AG04450 (cell line): ENCODE measurements at regions of chr17 and their contacts with region 1.

Region 1: DNA sequence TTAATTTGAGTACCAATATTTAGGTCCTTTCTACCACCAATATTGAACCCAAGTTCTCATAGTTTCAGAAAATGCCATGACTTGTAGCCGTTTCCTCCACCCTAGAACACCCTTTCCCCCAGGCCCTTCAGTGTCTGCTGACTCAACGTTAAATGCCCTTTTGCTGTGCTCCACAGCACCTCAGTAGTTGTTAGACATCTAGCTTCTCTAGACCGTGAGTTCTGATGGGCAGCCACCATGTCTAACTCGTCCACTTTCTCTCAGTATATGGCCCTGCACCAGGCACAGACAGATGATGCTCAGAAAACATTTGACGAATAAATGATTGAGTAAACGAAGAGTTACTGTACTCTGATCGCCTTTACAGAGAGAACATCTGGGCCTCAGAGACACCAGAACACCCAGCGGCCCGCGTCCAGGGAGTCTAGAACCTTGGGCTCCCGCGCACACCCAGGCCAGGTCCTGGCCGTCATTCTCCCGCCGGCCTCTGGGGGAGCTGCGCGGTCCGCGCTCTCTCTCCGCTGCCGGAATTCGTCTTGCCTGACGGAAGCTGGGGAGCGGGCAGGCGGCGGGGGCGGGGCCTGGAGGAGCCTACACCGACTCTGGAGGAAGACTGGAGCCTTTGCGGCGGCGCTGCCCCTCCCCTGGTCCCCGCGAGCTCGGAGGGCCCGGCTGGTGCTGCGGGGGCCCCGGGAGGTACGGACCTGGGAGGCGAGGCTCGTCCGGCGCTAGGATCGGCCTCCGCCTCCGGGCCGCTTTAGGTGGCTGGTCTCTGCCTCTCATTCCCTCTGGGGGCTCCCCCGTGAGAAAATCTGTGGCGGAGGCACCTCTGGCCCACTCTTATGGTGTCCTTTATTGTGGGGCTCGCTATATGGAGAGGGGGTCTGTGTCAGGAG is at the start of gene NKIRAS2:
- DNase-seq: peak; percentile 61
- H3K4me3 ChIP-seq: peak within 1 kb of the TSS; percentile 88
- H3K27ac ChIP-seq: peak within 1 kb of the TSS; percentile 61
- H3K27me3 ChIP-seq: no peaks in the 10 kb centered on the region
- CTCF ChIP-seq: peak; percentile 87
- polyA plus RNA-seq, gene NKIRAS2: 46.5 and 51.3 TPM in 2 replicates

Region 2: GRCh38 chr17:41966463-41967140 is 53.2 kb before region 1 on chr17 and contains the start of gene CNP:
- CTCF ChIA-PET with region 1: interaction called, 4 read pairs
- POLR2A ChIA-PET with region 1: interaction called, 17 read pairs
- DNase-seq: peak; percentile 53
- H3K4me3 ChIP-seq: peak within 1 kb of the TSS; percentile 84
- H3K27ac ChIP-seq: peak within 1 kb of the TSS; percentile 65
- H3K27me3 ChIP-seq: peaks cover under 1% of the 10 kb centered on the region
- CTCF ChIP-seq: no peak
- polyA plus RNA-seq, gene CNP: 53.0 and 85.7 TPM in 2 replicates

Region 3: DNA sequence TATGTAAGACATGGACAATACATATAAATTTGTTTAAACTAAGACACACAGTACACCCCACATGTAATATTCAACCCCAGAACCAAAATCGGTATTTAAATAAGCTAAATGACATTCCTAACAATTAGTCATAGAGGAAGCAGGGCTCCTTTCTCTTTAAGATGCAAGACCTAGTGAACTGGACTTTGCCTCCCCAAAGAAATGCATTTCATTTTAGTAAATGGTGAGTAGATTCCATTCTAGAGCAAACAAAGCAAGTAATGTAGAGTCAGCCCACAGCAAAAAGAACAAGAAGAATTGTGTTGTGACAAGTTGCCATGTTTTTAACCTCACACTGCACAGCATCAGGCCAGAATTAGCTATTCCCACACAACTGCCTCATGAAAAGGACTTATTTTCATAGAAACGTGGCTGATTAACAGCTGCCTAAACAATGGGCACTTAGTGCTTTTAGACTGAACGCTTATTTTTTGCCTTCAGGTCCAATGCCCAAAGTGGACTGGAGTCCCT is 16.9 kb before region 1 on chr17:
- CTCF ChIA-PET with region 1: interaction called, 16 read pairs
- POLR2A ChIA-PET with region 1: interaction called, 8 read pairs
- DNase-seq: no peak
- H3K4me3 ChIP-seq: no peak overlapping the region
- H3K27ac ChIP-seq: peak overlapping the region; percentile 75
- H3K27me3 ChIP-seq: no peaks in the 10 kb centered on the region
- CTCF ChIP-seq: no peak

Region 4: DNA sequence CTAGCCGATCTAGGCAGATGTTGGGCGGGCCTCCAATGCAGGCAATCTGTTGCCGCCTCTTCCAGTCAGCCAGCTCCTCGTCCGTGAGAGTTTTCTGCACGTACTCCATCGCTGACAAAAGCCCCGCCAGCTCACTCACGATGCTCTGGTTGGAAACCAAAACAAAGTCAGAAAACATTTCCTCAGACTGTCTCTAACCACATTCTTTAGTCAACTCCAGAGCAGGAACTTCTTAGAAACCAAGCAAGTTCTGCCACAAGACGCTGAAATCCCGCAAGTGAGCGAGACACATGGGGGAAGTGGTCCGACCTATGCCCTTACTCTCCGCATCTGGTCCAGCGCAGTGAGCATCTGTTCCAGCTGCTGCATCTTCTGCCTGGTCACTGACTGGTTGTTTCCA is 317.7 kb after region 1 on chr17:
- CTCF ChIA-PET with region 1: no interaction called
- POLR2A ChIA-PET with region 1: no interaction called
- DNase-seq: peak; percentile 58
- H3K4me3 ChIP-seq: no peak overlapping the region
- H3K27ac ChIP-seq: peak overlapping the region; percentile 52
- H3K27me3 ChIP-seq: no peaks in the 10 kb centered on the region
- CTCF ChIP-seq: no peak